G401 (cell line): ENCODE measurements at regions of chr3 and their contacts with region 1.

Region 1: GRCh38 chr3:197516517-197516889 is 39.3 kb downstream of the BDH1 start:
- DNase-seq: no peak

Region 2: GRCh38 chr3:197599089-197599765 is 82.7 kb after region 1 on chr3:
- in situ Hi-C with region 1: loop called (anchors 10 kb)
- DNase-seq: peak; percentile 90